Right ventricle myocardium inferior (tissue), 1 donor: ENCODE measurements at regions of chr12 and their contacts with region 1.

Region 1: GRCh38 chr12:56299853-56300643 is at the start of gene CS:
- DNase-seq: peak; percentile 100
- ATAC-seq: peak; percentile 98
- total RNA-seq, gene CS: 799 TPM

Region 2: DNA sequence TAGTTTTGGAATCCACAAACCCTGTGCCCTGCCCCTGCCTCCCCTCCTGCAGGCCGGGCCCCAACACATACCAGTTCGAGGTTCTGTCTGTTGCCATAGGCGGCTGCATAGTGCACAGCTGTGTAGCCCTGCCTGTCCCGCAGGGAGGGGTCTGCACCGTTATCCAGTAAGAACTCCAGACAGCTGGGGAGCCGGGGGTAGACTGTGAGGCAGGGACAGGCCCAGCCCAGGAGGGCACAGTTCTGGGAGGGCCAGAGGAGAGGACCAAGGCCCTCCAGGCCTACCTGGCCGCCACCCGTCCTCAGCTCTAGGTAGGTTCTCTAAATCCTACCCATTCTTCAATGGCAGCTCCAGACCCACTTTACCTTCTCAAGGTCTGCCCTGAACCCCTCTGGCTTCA is 51.4 kb before region 1 on chr12:
- intact Hi-C with region 1: no loop called
- DNase-seq: peak; percentile 16
- ATAC-seq: no peak

Region 3: DNA sequence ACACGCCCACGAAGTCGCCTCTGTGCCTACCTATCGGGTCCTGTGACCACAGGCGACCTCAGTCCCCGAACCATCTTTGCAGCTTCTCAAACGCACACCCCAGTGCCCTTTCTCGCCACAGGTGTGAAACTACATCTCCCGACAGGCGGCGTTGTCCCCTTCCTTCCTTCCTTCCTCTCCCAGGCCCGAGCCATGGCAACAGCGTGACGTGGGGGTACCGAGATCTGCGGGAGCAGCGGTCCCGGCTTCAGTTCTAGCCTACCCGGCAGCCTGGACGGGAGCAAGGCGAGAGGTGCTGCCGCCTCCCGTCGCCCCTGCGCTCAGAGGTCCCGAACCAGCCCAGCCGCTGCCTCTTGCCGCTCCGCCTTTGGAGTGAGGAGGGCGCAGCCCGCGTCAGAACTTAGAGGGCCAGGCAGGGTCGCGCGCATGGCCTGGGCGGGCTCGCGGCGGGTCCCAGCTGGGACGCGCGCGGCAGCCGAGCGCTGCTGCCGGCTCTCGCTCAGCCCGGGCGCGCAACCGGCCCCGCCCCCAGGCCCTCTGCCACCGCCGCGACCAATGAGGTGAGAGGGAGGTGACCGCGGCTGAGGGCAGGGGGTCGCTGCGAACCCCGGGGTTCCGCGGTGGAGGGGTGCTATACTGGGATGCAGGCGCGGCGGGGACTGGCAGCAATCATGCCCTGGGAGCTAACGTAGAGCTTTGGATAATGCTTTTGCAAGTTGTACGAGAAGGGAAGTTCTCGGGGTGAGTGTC is 33.2 kb before region 1 on chr12 and contains the start of gene COQ10A:
- intact Hi-C with region 1: loop called (anchors 2 kb)
- DNase-seq: peak; percentile 94
- ATAC-seq: peak; percentile 95
- total RNA-seq, gene COQ10A: 130 TPM

Region 4: GRCh38 chr12:56315622-56316473 is 15.8 kb after region 1 on chr12 and contains the start of gene CNPY2:
- intact Hi-C with region 1: loop called (anchors 1 kb)
- DNase-seq: peak; percentile 97
- ATAC-seq: peak; percentile 97
- total RNA-seq, gene CNPY2: 36.5 TPM